Dorsolateral prefrontal cortex (tissue), 120 donors: ENCODE measurements at regions of chr9 and their contacts with region 1.

Region 1: DNA sequence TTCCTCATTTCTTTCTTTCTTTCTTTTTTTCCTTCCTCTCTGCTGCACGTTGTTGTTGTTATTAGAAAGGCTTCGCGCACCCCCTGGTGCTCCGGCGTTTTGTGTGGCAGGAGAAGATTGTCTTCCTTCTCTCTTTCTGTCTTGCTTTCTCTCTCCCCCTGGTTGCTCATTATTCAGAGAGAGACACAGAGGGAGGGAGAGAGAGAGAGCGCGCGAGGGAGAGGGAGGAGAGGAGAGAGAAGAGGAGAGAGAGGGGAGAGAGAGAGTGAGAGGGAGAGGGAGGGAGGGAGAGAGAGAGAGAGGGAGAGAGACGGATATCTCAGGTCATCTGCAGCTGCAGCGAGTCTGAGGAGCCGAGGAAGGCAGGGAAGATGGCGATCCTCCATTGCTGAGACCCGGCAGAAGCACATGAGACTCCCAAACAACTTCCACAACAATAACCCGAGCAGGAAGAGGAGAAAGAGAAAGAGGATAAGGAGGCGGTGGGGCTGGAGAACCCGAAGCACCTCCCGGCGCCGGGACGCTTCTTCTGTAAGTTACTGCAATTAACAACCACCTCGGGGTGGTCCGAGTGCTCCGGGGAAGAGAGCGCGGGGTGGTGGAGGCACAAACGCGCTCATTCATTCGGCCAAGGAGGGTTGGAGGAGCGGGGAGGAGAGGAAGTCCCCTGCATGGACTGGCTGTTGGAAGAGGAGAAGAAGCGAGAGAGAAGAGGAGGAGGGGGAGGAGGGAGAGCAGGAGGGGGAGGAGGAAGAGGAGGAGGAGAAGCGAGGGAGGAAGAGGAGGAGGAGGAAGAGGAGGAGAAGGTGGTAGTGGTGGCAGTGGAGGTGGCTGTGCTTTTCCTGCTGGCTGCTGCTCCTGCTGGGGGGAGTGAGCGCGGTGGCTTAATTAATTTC is at the start of gene ZNF462:
- DNase-seq: peak in 7 of 10 donors; percentile 24 to 61 (median 55)
- H3K4me3 ChIP-seq: peak within 1 kb of the TSS; percentile 54 to 92 (median 77)
- H3K27ac ChIP-seq: peak within 1 kb of the TSS; percentile 60 to 95 (median 90)
- H3K27me3 ChIP-seq: peaks cover 0 to 29% (median 12%) of the 10 kb centered on the region in 45 donors
- CTCF ChIP-seq: peak in 29 of 56 donors; percentile 6 to 51 (median 23)
- total RNA-seq, gene ZNF462: 28.3 to 76.5 (median 48.5) TPM

Region 2: GRCh38 chr9:105881654-105882349 is 981.3 kb before region 1 on chr9:
- intact Hi-C with region 1: loop called in 1 of 2 experiments (anchors 10 kb)
- DNase-seq: peak; percentile 51 to 90 (median 72)
- H3K4me3 ChIP-seq: peak overlapping the region in 10 of 59 donors; percentile 9 to 42 (median 19)
- H3K27ac ChIP-seq: peak overlapping the region in 10 of 59 donors; percentile 21 to 73 (median 44)
- H3K27me3 ChIP-seq: peaks cover 0 to 4% (median 0%) of the 10 kb centered on the region in 45 donors
- CTCF ChIP-seq: peak; percentile 55 to 96 (median 88)

Region 3: DNA sequence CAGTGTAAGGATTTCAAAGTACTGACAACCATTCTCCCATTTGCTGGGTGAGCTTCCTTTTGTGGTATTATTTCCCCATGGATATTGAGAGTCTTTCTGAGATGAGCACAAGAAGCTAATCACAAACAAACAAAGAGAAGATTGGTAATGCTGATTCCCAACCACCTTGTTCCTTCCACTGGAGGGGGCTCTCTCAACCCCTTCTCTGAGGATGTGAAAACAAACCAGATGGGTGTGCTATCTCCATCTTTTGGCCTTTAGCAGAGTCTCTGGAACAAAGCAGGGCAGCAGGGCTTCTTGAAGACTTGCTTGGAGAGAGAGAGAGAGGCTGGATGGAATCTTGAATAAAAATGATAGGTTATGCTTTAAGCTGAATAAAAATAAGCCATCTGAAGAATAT is 576.8 kb before region 1 on chr9:
- intact Hi-C with region 1: loop called (anchors 10 kb)
- DNase-seq: peak in 2 of 10 donors; percentile 37 to 50
- H3K4me3 ChIP-seq: peak overlapping the region in 27 of 59 donors; percentile 31 to 65 (median 53)
- H3K27ac ChIP-seq: peak overlapping the region in 51 of 59 donors; percentile 4 to 88 (median 78)
- H3K27me3 ChIP-seq: no peaks in the 10 kb centered on the region
- CTCF ChIP-seq: peak in 53 of 56 donors; percentile 13 to 70 (median 48)

Region 4: GRCh38 chr9:106621313-106622163 is 241.5 kb before region 1 on chr9:
- intact Hi-C with region 1: loop called in 1 of 2 experiments (anchors 5 kb)
- DNase-seq: peak in 4 of 10 donors; percentile 35 to 53 (median 45)
- H3K4me3 ChIP-seq: peak overlapping the region in 52 of 59 donors; percentile 5 to 64 (median 37)
- H3K27ac ChIP-seq: peak overlapping the region in 53 of 59 donors; percentile 4 to 89 (median 70)
- H3K27me3 ChIP-seq: peaks cover 0 to 4% (median 0%) of the 10 kb centered on the region in 45 donors
- CTCF ChIP-seq: no peak

Region 5: GRCh38 chr9:106784076-106784475 is 79.0 kb before region 1 on chr9:
- intact Hi-C with region 1: no loop called
- DNase-seq: no peak
- H3K4me3 ChIP-seq: no peak overlapping the region
- H3K27ac ChIP-seq: no peak overlapping the region
- H3K27me3 ChIP-seq: no peaks in the 10 kb centered on the region
- CTCF ChIP-seq: no peak

Region 6: GRCh38 chr9:106906136-106906535 is 43.1 kb after region 1 on chr9:
- intact Hi-C with region 1: no loop called
- DNase-seq: no peak
- H3K4me3 ChIP-seq: no peak overlapping the region
- H3K27ac ChIP-seq: no peak overlapping the region
- H3K27me3 ChIP-seq: no peaks in the 10 kb centered on the region
- CTCF ChIP-seq: no peak

Region 7: GRCh38 chr9:106921341-106921899 is 58.3 kb after region 1 on chr9:
- intact Hi-C with region 1: loop called (anchors 2 to 5 kb)
- DNase-seq: peak in 1 of 10 donors; percentile 47
- H3K4me3 ChIP-seq: peak overlapping the region in 43 of 59 donors; percentile 0 to 46 (median 21)
- H3K27ac ChIP-seq: peak overlapping the region; percentile 77 to 98 (median 93)
- H3K27me3 ChIP-seq: no peaks in the 10 kb centered on the region
- CTCF ChIP-seq: no peak

Region 8: DNA sequence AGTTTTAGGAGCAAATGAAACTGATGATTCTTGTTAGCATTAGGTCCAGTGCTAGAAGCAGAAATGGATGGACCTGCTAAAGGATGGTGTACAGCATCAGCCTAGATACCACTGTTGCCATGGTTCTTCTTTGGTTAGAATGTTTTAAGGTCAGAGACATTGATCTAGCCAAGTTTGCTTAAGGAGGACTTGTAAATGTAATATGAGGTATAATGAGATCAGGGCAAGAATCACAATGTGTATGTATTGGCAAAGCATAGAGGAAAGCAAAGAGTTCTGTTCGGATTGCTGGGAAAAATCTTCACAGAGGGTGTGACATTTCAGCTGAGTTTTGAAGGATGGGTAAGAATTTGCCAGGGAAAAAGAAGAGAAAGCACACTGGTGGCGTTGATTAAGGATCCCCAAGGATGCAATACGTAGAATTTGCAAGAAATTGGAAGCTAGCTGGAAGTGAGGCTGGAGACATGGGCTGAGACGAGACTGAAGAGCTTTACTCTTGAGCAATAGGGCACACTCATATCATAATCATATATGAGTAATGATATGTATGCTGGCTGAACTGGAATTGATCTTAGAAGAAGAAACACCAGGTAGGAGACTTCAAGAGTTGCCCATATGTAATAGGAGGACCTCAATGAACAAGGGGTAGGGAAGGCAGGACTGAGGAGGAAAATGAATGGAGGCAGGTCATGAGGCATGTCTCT is 101.9 kb after region 1 on chr9:
- intact Hi-C with region 1: loop called in 1 of 2 experiments (anchors 5 kb)
- DNase-seq: no peak
- H3K4me3 ChIP-seq: no peak overlapping the region
- H3K27ac ChIP-seq: no peak overlapping the region
- H3K27me3 ChIP-seq: no peaks in the 10 kb centered on the region
- CTCF ChIP-seq: no peak

Region 9: GRCh38 chr9:107172160-107172978 is 309.3 kb after region 1 on chr9:
- intact Hi-C with region 1: loop called in 1 of 2 experiments (anchors 5 kb)
- DNase-seq: peak; percentile 63 to 91 (median 76)
- H3K4me3 ChIP-seq: no peak overlapping the region
- H3K27ac ChIP-seq: no peak overlapping the region
- H3K27me3 ChIP-seq: peaks cover 0 to 4% (median 0%) of the 10 kb centered on the region in 45 donors
- CTCF ChIP-seq: peak; percentile 83 to 98 (median 93)